Mammary epithelial cell (primary cell): ENCODE measurements at regions of chr5 and their contacts with region 1.

Region 1: GRCh38 chr5:36739751-36740221 is 133.4 kb downstream of the SLC1A3 start:
- DNase-seq: peak; percentile 55
- H3K4me3 ChIP-seq: no peak overlapping the region
- H3K27ac ChIP-seq: no peak overlapping the region
- H3K4me1 ChIP-seq: peaks cover 9% of the 10 kb centered on the region
- H3K27me3 ChIP-seq: no peaks in the 10 kb centered on the region
- CTCF ChIP-seq: peak; percentile 95 to 97

Region 2: DNA sequence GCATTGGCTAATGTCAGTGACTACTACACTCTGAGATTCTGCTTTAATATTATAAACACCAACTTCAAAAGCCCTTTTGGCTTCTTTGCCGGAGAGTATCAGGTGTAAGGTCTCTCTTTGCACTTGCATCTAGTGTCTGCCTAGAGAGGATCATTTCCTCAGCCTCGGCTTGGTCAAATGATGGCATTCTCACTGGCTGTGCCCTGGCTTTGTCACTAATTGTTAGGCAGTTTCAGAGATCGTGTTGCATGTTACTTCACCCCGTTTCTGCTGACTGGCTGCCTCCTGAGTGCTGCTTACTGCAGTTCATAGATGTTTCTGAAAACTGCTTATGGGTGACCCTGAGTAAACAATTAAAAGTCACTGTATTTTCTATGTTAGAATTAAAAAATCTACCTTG is 84.6 kb before region 1 on chr5:
- CTCF ChIA-PET with region 1: no interaction called
- dilution Hi-C with region 1: no loop called
- in situ Hi-C with region 1: no loop called
- intact Hi-C with region 1: no loop called
- DNase-seq: no peak
- H3K4me3 ChIP-seq: no peak overlapping the region
- H3K27ac ChIP-seq: no peak overlapping the region
- H3K4me1 ChIP-seq: peaks cover 42% of the 10 kb centered on the region
- H3K27me3 ChIP-seq: no peaks in the 10 kb centered on the region
- CTCF ChIP-seq: no peak

Region 3: GRCh38 chr5:36870399-36871040 is 130.7 kb after region 1 on chr5:
- CTCF ChIA-PET with region 1: interaction called, 5 read pairs
- dilution Hi-C with region 1: loop called (anchors 5 kb)
- in situ Hi-C with region 1: loop called (anchors 5 kb)
- intact Hi-C with region 1: loop called (anchors 1 kb)
- DNase-seq: peak; percentile 62
- H3K4me3 ChIP-seq: no peak overlapping the region
- H3K27ac ChIP-seq: no peak overlapping the region
- H3K4me1 ChIP-seq: no peaks in the 10 kb centered on the region
- H3K27me3 ChIP-seq: no peaks in the 10 kb centered on the region
- CTCF ChIP-seq: peak; percentile 53 to 67

Region 4: DNA sequence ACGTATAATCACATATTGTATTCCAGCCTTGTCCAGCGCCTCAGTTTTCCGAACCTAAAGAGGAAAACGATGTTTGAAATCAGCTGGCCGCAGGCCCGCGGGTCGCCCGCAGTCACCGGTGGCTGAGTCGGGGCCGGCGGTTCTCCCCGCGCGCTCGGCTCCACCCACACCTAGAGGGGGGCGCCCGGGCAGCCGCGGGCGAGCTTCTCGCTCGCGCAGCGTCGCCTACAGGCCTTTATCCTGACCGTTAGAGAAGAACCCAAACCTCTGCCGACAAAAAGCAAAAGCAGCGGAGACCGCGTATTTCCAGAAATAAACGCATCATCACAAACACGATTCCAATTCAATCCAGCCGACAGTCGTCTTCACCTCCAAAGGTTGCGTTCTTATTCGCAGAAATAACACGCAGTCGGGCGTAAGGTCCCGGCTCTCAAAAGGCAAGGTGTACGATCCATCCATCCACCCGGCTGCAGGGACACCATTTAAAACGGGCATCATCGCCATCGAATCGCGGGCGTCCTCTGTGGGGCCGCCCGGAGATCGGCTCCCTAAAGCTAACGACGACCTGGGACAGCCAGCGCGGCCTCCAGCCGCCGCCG is 136.1 kb after region 1 on chr5:
- CTCF ChIA-PET with region 1: interaction called, 5 read pairs
- dilution Hi-C with region 1: loop called (anchors 5 kb)
- in situ Hi-C with region 1: loop called (anchors 5 kb)
- intact Hi-C with region 1: loop called (anchors 1 kb)
- DNase-seq: peak; percentile 72
- H3K4me3 ChIP-seq: peak overlapping the region; percentile 69 to 90 (median 88)
- H3K27ac ChIP-seq: peak overlapping the region; percentile 78
- H3K4me1 ChIP-seq: peaks cover 6% of the 10 kb centered on the region
- H3K27me3 ChIP-seq: no peaks in the 10 kb centered on the region
- CTCF ChIP-seq: peak; percentile 18 to 53

Region 5: GRCh38 chr5:36998578-36998977 is 258.8 kb after region 1 on chr5:
- CTCF ChIA-PET with region 1: no interaction called
- dilution Hi-C with region 1: loop called (anchors 10 kb)
- in situ Hi-C with region 1: loop called (anchors 10 kb)
- intact Hi-C with region 1: no loop called
- DNase-seq: no peak
- H3K4me3 ChIP-seq: no peak overlapping the region
- H3K27ac ChIP-seq: no peak overlapping the region
- H3K4me1 ChIP-seq: no peaks in the 10 kb centered on the region
- H3K27me3 ChIP-seq: no peaks in the 10 kb centered on the region
- CTCF ChIP-seq: no peak

Region 6: GRCh38 chr5:37005946-37006540 is 266.3 kb after region 1 on chr5:
- CTCF ChIA-PET with region 1: no interaction called
- dilution Hi-C with region 1: no loop called
- in situ Hi-C with region 1: loop called (anchors 10 kb)
- intact Hi-C with region 1: loop called (anchors 1 kb)
- DNase-seq: peak; percentile 20
- H3K4me3 ChIP-seq: no peak overlapping the region
- H3K27ac ChIP-seq: no peak overlapping the region
- H3K4me1 ChIP-seq: no peaks in the 10 kb centered on the region
- H3K27me3 ChIP-seq: no peaks in the 10 kb centered on the region
- CTCF ChIP-seq: peak; percentile 65 to 66

Region 7: DNA sequence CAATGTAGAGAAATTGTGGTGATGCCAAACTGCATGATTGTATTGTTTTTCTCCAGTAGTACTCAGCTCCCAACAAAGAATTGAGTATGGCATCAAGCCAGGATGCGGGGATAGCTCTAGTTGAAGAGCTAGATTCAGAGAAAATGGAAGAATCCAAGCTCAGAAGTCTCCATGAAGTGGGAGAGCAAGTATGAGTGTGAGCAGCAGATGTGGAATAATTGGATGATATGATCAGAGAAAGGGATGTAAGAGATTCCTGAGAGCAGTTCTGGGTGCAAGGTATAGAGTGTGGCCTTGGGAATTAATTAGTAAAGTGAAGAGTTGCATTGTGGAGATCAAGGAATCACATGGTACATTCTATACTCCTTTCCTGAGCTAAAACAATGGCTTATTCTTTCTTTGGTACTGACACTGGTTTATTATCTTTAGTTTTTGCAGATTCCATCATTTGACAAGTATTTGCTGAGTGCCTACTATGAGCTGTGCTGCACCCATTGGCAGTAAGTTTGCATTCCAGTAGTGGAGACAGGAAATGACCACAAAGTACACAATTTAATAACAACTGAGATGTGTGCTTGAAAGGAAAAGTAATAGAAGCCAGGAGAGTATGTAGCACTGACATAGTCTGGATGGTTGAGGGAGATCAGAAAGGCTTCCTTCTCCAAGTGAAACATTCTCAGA is 332.3 kb after region 1 on chr5:
- CTCF ChIA-PET with region 1: no interaction called
- dilution Hi-C with region 1: no loop called
- in situ Hi-C with region 1: no loop called
- intact Hi-C with region 1: no loop called
- DNase-seq: peak; percentile 72
- H3K4me3 ChIP-seq: no peak overlapping the region
- H3K27ac ChIP-seq: peak overlapping the region; percentile 30
- H3K4me1 ChIP-seq: peaks cover 16% of the 10 kb centered on the region
- H3K27me3 ChIP-seq: no peaks in the 10 kb centered on the region
- CTCF ChIP-seq: no peak

Region 8: GRCh38 chr5:37198842-37199241 is 459.1 kb after region 1 on chr5:
- CTCF ChIA-PET with region 1: interaction called, 18 read pairs
- dilution Hi-C with region 1: no loop called
- in situ Hi-C with region 1: no loop called
- intact Hi-C with region 1: no loop called
- DNase-seq: no peak
- H3K4me3 ChIP-seq: no peak overlapping the region
- H3K27ac ChIP-seq: no peak overlapping the region
- H3K4me1 ChIP-seq: no peaks in the 10 kb centered on the region
- H3K27me3 ChIP-seq: no peaks in the 10 kb centered on the region
- CTCF ChIP-seq: no peak